PC-3 (cell line): ENCODE measurements at regions of chr12 and their contacts with region 1.

Region 1: DNA sequence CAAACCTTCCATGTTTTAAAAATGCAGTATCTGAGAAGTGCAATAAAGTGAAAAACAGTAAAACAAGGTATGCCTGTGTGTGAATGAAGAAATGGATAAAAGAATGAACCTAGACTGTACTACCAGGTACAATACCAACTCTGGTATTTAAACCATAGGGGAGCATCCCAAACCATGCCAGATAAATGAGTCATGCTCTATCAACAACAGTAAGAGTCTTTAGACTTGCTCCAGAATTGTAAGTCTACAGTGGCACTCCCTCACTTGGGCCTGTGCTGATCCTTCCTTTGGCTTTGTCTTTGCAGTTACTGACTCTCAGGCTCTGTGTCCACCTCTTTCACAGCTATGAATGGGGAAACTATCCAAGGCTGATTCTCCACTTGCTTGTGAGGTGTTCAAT is 38.1 kb downstream of the BBS10 start:
- DNase-seq: peak; percentile 86
- ATAC-seq: peak; percentile 100
- H3K4me3 ChIP-seq: no peak overlapping the region
- H3K27ac ChIP-seq: no peak overlapping the region
- H3K4me1 ChIP-seq: peaks cover 8% of the 10 kb centered on the region
- H3K27me3 ChIP-seq: no peaks in the 10 kb centered on the region
- CTCF ChIP-seq: no peak

Region 2: GRCh38 chr12:76192416-76192815 is 117.7 kb before region 1 on chr12:
- CTCF ChIA-PET with region 1: no interaction called
- POLR2A ChIA-PET with region 1: interaction called, 13 read pairs
- intact Hi-C with region 1: no loop called
- DNase-seq: no peak
- ATAC-seq: no peak
- H3K4me3 ChIP-seq: no peak overlapping the region
- H3K27ac ChIP-seq: no peak overlapping the region
- H3K4me1 ChIP-seq: no peaks in the 10 kb centered on the region
- H3K27me3 ChIP-seq: no peaks in the 10 kb centered on the region
- CTCF ChIP-seq: no peak